Activated B cell treated with CpG ODN at 0.5 μM for 24 hours (primary cell): ENCODE measurements at regions of chr11 and their contacts with region 1.

Region 1: DNA sequence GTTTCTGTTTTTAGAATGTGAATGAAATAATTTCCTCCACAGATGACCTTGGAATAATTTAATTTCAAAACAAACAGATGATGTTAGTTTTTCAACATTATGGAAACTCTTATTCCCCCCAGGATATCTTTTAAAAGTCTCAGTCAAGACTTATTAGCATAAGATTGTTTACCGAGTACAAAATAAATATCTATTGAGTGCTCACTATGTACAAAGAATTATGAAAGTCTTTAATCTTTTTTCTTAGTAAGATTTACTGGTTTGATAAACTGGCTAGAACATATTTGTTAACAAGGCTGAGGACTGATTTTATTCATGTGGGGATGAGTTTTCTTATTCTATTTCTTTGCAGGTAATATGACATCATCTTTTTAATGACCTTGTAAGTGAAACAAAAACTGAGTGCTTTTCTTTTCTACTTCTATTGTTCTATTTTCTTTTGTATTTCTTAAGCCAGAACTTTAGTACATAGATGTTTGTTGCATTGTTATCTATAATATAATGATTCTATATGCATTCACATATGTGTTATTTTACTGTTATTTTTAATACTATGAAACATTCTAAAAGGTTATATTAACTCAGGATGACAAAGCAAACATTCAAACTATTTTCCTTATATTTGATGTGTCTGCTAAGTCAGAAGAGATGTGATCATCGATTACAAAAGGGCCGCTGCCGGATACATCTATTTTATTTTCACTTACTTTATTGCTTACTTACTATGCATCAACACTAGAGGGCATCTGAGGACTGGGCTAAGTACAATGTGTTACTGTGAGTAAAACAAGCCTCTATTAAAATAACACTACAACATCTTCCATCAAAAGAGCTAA is 111.0 kb upstream of the ARHGAP42 start:
- DNase-seq: no peak
- ATAC-seq: peak; percentile 72
- H3K4me3 Mint-ChIP-seq: no peak overlapping the region
- H3K27ac Mint-ChIP-seq: no peak overlapping the region
- H3K4me1 Mint-ChIP-seq: no peaks in the 10 kb centered on the region
- H3K27me3 Mint-ChIP-seq: peaks cover 2% of the 10 kb centered on the region
- CTCF ChIP-seq: no peak

Region 2: GRCh38 chr11:100687630-100688395 is 111.7 kb after region 1 on chr11:
- CTCF ChIA-PET with region 1: interaction called, 12 read pairs
- POLR2A ChIA-PET with region 1: no interaction called
- intact Hi-C with region 1: loop called (anchors 1 kb)
- DNase-seq: peak; percentile 53
- ATAC-seq: peak; percentile 50
- H3K4me3 Mint-ChIP-seq: peak overlapping the region; percentile 98
- H3K27ac Mint-ChIP-seq: peak overlapping the region; percentile 92
- H3K4me1 Mint-ChIP-seq: peaks cover 61% of the 10 kb centered on the region
- H3K27me3 Mint-ChIP-seq: no peaks in the 10 kb centered on the region
- CTCF ChIP-seq: peak; percentile 44

Region 3: DNA sequence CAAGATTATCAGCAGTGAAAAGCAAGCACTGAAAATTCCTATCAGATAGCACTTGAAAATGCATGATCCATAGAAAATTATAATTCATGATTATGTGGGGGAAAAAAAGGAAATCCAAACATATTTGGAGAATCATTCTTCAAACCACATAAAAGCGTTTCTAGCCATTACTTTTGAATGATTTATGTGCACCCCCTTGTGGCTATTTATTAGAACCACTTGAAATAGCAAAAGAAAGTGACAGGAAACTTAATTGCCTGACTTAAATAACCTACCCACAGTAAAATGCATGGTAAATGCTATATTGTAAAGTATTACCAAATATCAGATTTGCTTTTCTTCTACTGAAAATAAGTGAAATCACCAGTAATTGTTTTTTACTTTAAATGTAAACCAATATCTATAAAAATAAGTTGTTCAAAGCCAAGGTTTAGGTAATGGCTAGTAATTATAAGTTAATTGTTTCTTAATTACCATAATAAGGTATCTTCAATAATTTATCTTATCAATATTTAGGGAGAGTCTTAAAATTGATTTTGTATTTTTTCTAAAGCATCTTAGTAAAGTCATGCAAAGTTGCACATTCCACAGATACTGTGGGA is 279.5 kb after region 1 on chr11:
- CTCF ChIA-PET with region 1: interaction called, 80 read pairs
- POLR2A ChIA-PET with region 1: no interaction called
- intact Hi-C with region 1: loop called (anchors 1 kb)
- DNase-seq: no peak
- ATAC-seq: no peak
- H3K4me3 Mint-ChIP-seq: no peak overlapping the region
- H3K27ac Mint-ChIP-seq: no peak overlapping the region
- H3K4me1 Mint-ChIP-seq: no peaks in the 10 kb centered on the region
- H3K27me3 Mint-ChIP-seq: no peaks in the 10 kb centered on the region
- CTCF ChIP-seq: peak; percentile 66

Region 4: DNA sequence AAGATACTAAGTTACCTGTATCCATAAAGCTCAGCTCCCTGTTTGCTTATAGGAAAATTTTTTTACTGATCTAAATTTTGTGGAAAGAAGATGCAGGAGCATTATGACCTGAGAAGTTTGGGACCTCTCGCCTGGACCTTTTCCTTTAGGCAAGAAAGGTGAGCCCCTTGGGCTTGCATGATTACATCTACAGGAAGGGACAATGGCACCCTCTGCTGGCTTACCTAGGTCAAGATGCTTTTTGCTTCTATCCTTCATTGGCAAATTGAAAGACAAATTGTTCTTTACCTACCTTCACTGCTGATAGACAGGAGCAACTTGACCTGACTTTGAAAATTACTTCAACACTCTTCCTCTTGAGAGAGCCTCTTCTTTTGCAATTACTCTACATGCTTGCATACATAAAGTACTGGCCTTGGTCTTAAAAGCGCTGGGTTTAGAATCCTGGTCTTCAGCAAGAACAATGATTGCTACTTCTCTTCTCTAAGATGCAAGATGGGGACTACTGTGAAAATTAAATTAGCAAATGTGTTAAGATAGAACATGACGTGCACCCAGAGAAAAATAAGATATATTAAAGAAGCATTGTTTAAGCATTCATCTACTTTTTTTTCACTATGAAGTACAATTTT is 860.5 kb after region 1 on chr11:
- CTCF ChIA-PET with region 1: no interaction called
- POLR2A ChIA-PET with region 1: no interaction called
- intact Hi-C with region 1: loop called (anchors 2 kb)
- DNase-seq: no peak
- ATAC-seq: no peak
- H3K4me3 Mint-ChIP-seq: no peak overlapping the region
- H3K27ac Mint-ChIP-seq: no peak overlapping the region
- H3K4me1 Mint-ChIP-seq: no peaks in the 10 kb centered on the region
- H3K27me3 Mint-ChIP-seq: peaks cover 2% of the 10 kb centered on the region
- CTCF ChIP-seq: no peak

Region 5: DNA sequence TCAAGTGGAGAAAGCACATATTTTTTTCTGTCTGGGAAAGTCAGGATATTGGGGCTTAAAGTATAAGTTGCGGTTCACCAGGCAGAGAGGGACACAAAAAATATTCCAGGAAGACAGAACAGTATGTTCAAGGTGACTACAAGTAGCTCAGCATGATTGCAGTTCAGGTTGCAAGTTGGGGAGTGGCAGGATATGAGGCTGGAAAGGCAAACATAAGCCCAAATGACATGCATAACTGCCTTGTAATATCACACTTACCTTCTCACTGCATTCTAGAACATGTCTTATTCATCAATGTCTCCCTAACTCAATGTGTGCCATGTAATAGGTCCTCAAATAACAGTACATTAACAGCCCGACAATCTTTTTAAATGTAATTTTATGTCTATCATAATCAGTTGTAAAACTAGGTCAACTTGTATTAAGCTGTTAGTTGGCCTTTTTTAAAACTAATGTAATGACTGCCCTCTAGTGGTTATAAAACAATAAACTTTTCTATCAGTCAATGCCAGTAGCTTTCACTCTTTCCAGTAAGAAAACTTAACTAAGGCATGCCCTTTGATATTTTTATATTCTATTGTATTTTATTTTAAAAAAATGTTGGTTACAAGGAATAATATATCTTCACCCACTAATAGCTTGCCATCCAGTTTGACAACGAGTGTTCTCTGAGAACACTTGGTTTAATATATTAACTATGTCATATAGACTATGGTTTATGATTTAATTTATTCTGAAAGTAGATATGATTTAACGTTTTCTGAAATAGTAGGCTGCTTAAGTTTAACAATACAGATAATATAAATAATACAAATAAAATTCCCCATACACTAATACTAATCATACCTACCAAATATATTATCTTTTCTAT is 1431.7 kb after region 1 on chr11:
- CTCF ChIA-PET with region 1: no interaction called
- POLR2A ChIA-PET with region 1: no interaction called
- intact Hi-C with region 1: loop called (anchors 5 kb)
- DNase-seq: no peak
- ATAC-seq: no peak
- H3K4me3 Mint-ChIP-seq: no peak overlapping the region
- H3K27ac Mint-ChIP-seq: no peak overlapping the region
- H3K4me1 Mint-ChIP-seq: no peaks in the 10 kb centered on the region
- H3K27me3 Mint-ChIP-seq: peaks cover 11% of the 10 kb centered on the region
- CTCF ChIP-seq: peak; percentile 81